ENCODE measurements at regions of chr1 and their contacts with region 1.

Region 1: DNA sequence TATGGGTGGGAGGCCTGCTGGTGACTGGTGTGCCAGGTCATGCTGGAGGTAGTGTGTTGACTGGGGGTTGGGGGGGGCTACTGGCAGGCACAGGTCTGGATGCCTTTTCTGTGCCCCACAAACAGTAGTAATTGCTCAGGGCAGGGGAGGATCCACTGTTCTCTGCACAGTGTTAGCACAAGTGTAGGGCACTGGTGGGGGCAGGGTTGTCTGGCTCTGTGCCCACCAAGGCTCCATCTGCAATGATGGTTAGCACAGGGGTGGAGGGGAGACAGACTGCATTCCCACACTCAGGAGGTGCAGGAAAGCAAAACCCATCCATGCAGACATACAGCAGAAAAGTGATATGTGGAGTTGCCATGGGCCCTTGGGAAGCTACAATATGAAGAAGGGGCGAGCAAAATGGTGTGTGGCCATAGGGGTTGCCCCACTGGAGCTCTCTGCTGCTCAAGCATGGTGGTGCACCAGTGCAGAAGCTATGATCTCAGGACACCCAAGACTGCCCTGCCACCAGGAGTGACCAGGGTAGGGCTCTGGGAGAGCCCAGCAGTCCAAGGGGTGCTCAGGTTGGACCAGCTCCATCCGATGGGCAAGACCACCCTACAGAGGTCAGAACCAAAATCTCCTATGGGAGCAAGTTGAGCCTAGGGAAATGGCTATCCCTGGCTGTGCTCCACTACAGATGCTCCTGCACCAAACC is 122.2 kb upstream of the KCTD3 start:
- DNase-seq: peak; percentile 52

Region 2: DNA sequence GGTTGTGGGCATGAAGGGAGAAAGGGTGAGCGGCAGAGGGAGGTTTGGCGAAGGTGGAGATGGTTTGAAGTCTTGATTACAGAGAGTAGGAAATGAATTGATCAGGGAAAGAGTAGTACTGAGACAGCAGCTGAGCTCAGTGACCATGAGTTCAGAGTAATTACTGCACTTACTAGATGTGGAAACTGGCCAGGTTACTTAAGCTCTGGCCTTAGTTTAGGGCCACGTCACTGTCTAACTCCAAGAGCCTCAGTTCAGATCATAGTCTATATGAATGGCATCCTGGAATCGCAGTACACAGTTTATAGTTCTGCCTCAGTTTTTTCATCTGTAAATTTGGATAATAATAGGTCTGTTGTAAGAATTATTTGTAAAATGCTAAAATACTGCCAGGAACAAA is 200.3 kb after region 1 on chr1:
- intact Hi-C with region 1: loop called in 1 of 2 experiments (anchors 5 kb)
- DNase-seq: no peak

Region 3: GRCh38 chr1:216758161-216758560 is 1313.3 kb after region 1 on chr1:
- intact Hi-C with region 1: no loop called
- DNase-seq: no peak